ENCODE measurements at regions of chr2 and their contacts with region 1.

Region 1: DNA sequence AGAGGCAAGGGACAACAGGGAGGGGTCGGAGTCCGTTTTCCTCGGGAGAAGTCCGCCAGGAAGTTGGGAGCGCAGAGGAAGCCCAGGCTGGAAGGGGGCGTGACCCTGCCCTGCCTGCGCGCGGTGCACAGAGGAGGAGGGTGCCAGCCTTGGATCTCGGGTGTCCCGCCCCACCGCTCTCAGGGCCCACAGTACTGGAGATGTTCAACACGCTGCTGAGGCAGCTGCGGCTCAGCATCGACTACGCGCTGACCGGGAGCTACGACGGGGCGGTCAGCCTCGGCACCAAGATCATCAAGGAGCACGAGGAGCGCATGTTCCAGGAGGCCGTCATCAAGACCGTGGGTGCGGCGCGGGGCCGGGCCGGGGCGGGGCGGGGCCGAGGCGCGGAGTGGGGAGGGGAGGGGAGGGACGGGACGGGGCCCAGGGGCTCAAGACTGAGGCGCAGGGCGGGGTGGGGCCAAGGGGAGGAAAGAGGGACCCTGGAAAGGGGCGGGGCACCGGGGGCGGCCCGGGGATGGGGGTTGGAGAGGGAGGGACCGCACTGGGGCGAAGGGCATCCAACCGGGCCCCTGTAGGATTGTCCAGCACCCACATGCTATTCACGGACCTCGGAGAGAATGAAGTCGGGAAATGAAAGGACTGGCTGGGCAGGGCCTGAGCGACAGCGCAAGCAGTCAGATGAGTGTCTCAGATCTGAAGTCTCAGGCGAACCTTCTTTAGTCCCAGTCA is 36.6 kb downstream of the POMC start:
- DNase-seq: peak; percentile 30
- H3K4me3 ChIP-seq: no peak overlapping the region
- H3K27ac ChIP-seq: no peak overlapping the region
- H3K4me1 ChIP-seq: peaks cover 10% of the 10 kb centered on the region
- H3K27me3 ChIP-seq: no peaks in the 10 kb centered on the region

Region 2: DNA sequence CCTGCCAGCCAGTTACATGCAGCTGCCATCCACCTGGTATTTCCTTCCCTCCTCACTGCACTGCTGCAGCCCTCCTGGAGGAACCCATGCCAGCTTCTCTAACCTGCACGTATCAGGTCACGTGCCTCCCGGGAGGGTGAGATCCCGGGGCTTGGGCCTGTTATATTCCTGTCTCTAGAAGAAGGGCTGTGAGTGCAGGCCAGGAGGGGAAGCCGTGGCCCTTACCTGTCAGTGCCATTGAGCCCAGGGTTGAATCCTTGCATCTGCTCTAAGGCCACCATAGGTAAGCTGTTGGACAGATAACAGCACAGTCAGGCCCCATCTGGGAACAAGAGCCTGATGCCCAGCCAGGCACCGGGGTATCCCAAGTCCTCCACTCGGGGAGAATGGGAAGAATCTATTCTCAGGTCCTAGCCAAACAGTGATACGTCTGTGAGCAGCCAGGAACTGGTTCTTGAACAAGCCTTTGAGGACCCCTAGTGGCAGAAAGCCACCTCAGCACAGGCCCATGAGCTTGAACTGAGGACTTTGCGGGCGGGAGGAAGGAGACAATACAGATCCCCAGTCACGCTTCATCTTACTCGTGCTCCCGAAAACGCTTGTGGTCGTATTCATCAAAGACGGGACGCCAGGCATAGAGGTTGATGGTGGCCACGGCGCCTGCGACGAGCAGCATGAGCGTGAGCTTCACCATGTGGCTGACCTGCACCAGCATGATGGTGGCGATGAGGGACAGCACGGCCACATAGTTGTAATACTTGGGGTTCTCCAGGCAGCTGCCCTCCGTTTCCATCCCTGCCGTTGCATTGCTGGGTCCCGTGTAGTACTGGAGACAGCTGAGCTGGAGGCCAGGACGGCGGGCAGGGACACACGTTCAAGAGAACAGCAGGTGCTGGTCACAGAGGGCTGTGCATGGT is 304.2 kb before region 1 on chr2:
- in situ Hi-C with region 1: loop called (anchors 25 kb)
- DNase-seq: peak; percentile 90
- H3K4me3 ChIP-seq: no peak overlapping the region
- H3K27ac ChIP-seq: no peak overlapping the region
- H3K4me1 ChIP-seq: no peaks in the 10 kb centered on the region
- H3K27me3 ChIP-seq: no peaks in the 10 kb centered on the region

Region 3: DNA sequence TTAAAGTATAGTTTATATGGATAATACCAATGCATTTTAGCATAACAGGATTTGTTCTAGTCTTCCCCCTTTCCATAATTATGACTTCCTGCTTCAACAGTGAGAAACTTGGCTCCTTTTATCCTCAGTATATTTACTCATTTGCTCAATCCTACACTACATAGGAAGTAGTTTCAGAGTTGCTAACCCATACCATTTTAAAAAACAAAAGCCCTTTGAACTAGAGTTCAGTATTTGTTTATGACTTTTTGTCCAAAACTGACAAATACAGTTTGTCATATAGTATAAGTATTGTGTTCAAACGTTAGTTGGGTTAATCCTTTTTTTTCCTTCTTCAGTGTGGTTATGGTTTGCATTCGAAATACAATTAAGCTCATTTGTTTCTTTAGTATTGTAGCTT is 154.1 kb before region 1 on chr2:
- in situ Hi-C with region 1: loop called (anchors 5 kb)
- DNase-seq: no peak
- H3K4me3 ChIP-seq: no peak overlapping the region
- H3K27ac ChIP-seq: no peak overlapping the region
- H3K4me1 ChIP-seq: peaks cover 16% of the 10 kb centered on the region
- H3K27me3 ChIP-seq: no peaks in the 10 kb centered on the region

Region 4: GRCh38 chr2:25187729-25188350 is 56.1 kb after region 1 on chr2:
- in situ Hi-C with region 1: loop called (anchors 5 kb)
- DNase-seq: no peak
- H3K4me3 ChIP-seq: no peak overlapping the region
- H3K27ac ChIP-seq: no peak overlapping the region
- H3K4me1 ChIP-seq: no peaks in the 10 kb centered on the region
- H3K27me3 ChIP-seq: peaks cover 8% of the 10 kb centered on the region; the same call in 1 of the 2 replicates